ENCODE measurements at regions of chr2 and their contacts with region 1.

Region 1: GRCh38 chr2:290090-290722 is 2.3 kb upstream of the ALKAL2 start:
- DNase-seq: no peak
- H3K4me3 ChIP-seq: peak overlapping the region; percentile 45
- H3K27me3 ChIP-seq: peaks cover 8% of the 10 kb centered on the region
- CTCF ChIP-seq: peak; percentile 93

Region 2: GRCh38 chr2:38147-38546 is 252.1 kb before region 1 on chr2:
- CTCF ChIA-PET with region 1: no interaction called
- POLR2A ChIA-PET with region 1: no interaction called
- DNase-seq: no peak
- H3K4me3 ChIP-seq: no peak overlapping the region
- H3K27me3 ChIP-seq: no peaks in the 10 kb centered on the region
- CTCF ChIP-seq: no peak

Region 3: DNA sequence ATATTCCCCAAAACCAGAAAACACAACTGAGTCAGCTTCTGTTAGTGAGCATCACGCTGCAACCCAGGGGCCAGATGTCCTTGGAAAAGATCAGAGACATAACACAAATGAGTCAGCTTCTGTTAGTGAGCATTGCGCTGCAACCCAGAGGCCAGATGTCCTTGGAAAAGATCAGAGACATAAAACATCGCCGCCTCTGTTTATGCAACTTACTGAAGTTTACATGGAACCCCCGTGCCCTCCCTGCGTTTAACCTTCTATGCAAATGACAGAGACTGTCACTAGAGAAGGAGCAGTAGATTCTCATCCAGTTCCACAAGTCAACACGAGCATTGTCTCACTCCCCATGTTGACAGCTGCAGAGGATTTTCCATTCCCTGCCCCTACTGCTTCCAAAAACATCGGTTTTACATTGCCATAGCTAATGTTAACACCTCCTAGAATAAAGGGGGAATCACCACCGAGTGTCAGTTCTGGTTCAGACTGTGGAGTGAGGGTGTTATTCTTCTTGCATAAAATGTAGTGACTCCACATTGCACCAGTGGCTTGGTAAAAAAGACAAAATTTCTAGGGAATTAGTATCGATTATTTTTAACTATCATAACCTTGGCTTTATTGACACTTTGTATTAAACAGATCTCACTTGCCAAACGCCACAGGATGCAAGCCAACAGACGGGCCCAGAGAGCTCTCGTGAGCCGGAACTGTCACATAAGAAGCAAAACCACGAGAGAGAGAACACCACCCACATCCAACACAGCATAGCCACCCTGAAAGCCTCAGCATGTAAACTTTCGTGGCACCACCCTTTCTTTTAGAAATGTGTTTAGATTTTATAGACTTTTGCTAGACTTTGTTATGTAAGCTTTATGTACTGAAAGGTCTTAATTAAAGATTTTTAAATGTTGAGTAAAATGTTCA is 114.1 kb before region 1 on chr2:
- CTCF ChIA-PET with region 1: interaction called, 13 read pairs
- POLR2A ChIA-PET with region 1: no interaction called
- DNase-seq: peak; percentile 15
- H3K4me3 ChIP-seq: no peak overlapping the region
- H3K27me3 ChIP-seq: no peaks in the 10 kb centered on the region
- CTCF ChIP-seq: no peak

Region 4: GRCh38 chr2:246489-247144 is 43.6 kb before region 1 on chr2:
- CTCF ChIA-PET with region 1: interaction called, 31 read pairs
- POLR2A ChIA-PET with region 1: no interaction called
- DNase-seq: peak; percentile 17
- H3K4me3 ChIP-seq: no peak overlapping the region
- H3K27me3 ChIP-seq: no peaks in the 10 kb centered on the region
- CTCF ChIP-seq: peak; percentile 67

Region 5: DNA sequence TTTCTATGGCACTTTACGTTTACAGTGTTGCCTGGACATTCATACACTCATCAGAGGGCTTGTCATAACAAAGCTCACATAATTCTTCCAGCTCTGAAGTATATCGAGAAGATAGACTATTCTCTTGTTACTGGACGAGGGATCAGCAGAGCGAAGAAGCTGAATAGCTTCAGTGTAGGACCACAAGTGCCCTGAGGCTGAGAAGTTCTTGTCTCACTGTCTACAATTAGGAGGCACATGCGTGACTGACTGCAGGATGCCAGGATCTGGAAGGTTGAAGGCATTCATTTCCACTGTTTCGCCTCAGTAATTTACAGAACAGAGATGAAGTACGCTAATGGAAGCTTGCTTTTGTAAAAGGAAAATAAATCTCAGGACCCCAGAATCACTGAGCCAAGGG is 36.0 kb before region 1 on chr2:
- CTCF ChIA-PET with region 1: interaction called, 21 read pairs
- POLR2A ChIA-PET with region 1: no interaction called
- DNase-seq: no peak
- H3K4me3 ChIP-seq: no peak overlapping the region
- H3K27me3 ChIP-seq: no peaks in the 10 kb centered on the region
- CTCF ChIP-seq: no peak

Region 6: GRCh38 chr2:419687-420317 is 129.6 kb after region 1 on chr2:
- CTCF ChIA-PET with region 1: no interaction called
- POLR2A ChIA-PET with region 1: no interaction called
- DNase-seq: no peak
- H3K4me3 ChIP-seq: no peak overlapping the region
- H3K27me3 ChIP-seq: no peaks in the 10 kb centered on the region
- CTCF ChIP-seq: no peak

Region 7: DNA sequence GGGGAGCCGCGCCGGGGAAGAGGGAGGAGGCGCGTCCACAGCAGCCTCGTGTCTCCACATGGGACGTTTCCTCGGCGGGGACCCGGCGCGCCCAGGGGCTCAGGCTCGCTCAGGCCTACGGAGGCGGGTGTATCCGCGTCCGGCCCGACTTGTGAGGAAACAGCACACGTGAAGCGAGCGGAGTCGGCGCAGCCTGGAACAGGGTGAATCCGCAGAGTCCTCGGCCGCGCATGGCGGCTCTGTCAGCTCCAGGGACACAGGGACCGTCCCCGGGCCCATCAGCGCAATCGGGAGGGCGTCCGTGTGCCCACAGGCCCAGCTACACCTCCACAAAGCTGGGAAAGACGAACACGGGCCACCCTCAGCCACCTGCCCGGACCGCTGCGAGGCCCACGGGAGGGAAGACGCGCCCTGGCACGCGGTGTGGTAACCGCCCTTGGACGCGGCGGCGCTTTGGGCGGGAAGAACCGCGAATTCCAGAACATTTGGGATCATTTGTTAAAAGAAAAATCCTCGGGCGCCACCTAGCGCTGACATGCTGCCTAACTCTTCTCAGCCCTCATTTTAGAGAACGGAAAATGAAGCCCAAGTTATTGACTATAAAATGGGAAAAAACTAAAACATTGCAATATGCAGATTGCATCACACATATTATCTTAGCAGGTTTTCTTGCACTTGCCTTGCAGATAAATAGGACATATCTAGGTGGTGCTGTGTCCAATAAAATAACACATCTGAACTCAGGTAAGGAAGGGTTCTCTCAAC is 346.6 kb after region 1 on chr2:
- CTCF ChIA-PET with region 1: interaction called, 14 read pairs
- POLR2A ChIA-PET with region 1: no interaction called
- DNase-seq: peak; percentile 4
- H3K4me3 ChIP-seq: peak overlapping the region; percentile 31
- H3K27me3 ChIP-seq: no peaks in the 10 kb centered on the region
- CTCF ChIP-seq: peak; percentile 80